Panc1 (cell line): ENCODE measurements at regions of chr3 and their contacts with region 1.

Region 1: DNA sequence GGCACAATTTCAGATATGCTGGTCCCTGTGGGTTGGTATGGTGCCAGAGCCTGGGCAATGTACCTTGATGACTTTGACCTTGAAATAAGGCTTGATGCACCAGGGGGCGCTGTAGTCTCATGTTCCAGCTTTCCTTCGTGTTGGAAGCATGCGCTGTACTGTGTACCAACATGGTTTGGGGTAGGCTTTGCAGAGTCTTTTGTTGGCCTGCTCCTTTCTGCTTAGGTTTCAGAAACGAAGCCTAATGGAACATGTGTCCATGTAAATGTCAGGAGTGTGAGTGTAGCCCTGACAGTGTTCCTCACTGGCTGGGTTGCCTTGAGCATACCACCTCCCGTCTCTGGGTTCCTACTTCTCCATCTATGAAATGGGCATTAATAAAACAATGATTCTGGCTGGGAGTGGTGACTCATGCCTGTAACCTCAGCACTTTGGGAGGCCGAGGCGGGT is 3.6 kb upstream of the CCR4 start:
- DNase-seq: peak; percentile 65
- ATAC-seq: peak; percentile 96
- H3K4me3 ChIP-seq: no peak overlapping the region
- H3K27ac ChIP-seq: no peak overlapping the region
- H3K4me1 ChIP-seq: no peaks in the 10 kb centered on the region
- H3K27me3 ChIP-seq: no peaks in the 10 kb centered on the region
- CTCF ChIP-seq: peak; percentile 76

Region 2: DNA sequence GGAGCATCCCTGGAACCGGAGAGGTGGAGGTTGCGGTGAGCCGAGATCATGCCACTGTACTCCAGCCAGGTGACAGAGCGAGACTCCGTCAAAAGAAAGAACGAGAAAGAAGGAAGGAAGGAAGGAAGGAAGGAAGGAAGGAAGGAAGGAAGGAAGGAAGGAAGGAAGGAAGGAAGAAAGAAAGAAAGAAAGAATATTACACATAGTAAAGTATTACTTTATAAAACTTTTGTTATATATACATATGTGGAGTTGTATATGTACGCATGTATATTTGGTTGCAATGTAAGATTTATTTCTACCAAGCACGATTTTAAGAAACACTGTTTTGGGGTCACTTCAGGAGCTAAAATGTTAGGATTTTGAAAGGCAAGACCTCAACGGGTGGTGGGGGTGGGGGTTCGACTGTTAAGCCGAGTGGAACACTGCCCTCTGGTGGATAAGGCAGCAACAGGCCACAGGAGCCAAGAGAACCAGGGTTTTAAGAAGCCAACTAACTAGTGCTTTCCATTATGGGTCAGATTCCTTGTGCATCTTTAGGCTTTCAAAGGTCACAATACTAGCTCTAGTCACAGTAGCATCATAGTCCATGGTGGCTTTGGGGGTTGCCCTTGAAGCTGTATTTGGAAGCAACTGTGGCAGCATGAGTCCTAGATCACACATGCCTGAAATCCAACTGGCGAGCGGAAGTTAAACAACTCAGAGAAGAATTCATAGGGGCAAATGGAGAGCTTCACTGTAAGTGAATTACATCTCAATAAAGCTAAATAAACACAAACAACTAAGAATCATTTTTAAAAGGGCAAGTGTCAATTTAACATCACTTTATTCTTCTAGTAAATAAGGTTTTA is 126.6 kb after region 1 on chr3:
- CTCF ChIA-PET with region 1: interaction called, 15 read pairs
- POLR2A ChIA-PET with region 1: no interaction called
- in situ Hi-C with region 1: no loop called
- intact Hi-C with region 1: loop called (anchors 5 kb)
- DNase-seq: peak; percentile 51
- ATAC-seq: peak; percentile 88
- H3K4me3 ChIP-seq: no peak overlapping the region
- H3K27ac ChIP-seq: no peak overlapping the region
- H3K4me1 ChIP-seq: no peaks in the 10 kb centered on the region
- H3K27me3 ChIP-seq: no peaks in the 10 kb centered on the region
- CTCF ChIP-seq: peak; percentile 88

Region 3: GRCh38 chr3:33372218-33373081 is 424.6 kb after region 1 on chr3:
- CTCF ChIA-PET with region 1: interaction called, 3 read pairs
- POLR2A ChIA-PET with region 1: no interaction called
- in situ Hi-C with region 1: no loop called
- intact Hi-C with region 1: loop called (anchors 5 kb)
- DNase-seq: peak; percentile 46
- ATAC-seq: peak; percentile 76
- H3K4me3 ChIP-seq: no peak overlapping the region
- H3K27ac ChIP-seq: no peak overlapping the region
- H3K4me1 ChIP-seq: no peaks in the 10 kb centered on the region; the same call in 1 of the 2 replicates
- H3K27me3 ChIP-seq: no peaks in the 10 kb centered on the region
- CTCF ChIP-seq: peak; percentile 87